Sigmoid colon (tissue), 7 donors: ENCODE measurements at regions of chr17 and their contacts with region 1.

Region 1: GRCh38 chr17:17681187-17681848 is at the start of gene RAI1:
- DNase-seq: peak; percentile 90
- H3K4me3 ChIP-seq: peak within 1 kb of the TSS; percentile 62 to 86 (median 75)
- H3K27ac ChIP-seq: peak within 1 kb of the TSS; percentile 93 to 99 (median 97)
- H3K4me1 ChIP-seq: peaks cover 0 to 40% (median 38%) of the 10 kb centered on the region in 4 donors
- H3K27me3 ChIP-seq: no peaks in the 10 kb centered on the region
- CTCF ChIP-seq: peak in 3 of 4 experiments; percentile 17 to 64 (median 37)
- EP300 ChIP-seq: no peak
- POLR2A ChIP-seq: no peak
- total RNA-seq, gene RAI1: 7.4 to 31.9 (median 12.5) TPM

Region 2: GRCh38 chr17:17729620-17730249 is 48.4 kb after region 1 on chr17:
- intact Hi-C with region 1: no loop called
- DNase-seq: no peak
- H3K4me3 ChIP-seq: no peak overlapping the region
- H3K27ac ChIP-seq: peak overlapping the region; percentile 21 to 75 (median 68)
- H3K4me1 ChIP-seq: peaks cover 0 to 74% (median 47%) of the 10 kb centered on the region in 4 donors
- H3K27me3 ChIP-seq: no peaks in the 10 kb centered on the region
- CTCF ChIP-seq: peak; percentile 7 to 63 (median 52)
- EP300 ChIP-seq: no peak
- POLR2A ChIP-seq: no peak

Region 3: GRCh38 chr17:17774009-17774881 is 92.9 kb after region 1 on chr17:
- intact Hi-C with region 1: loop called (anchors 1 kb)
- DNase-seq: peak; percentile 90
- H3K4me3 ChIP-seq: peak overlapping the region in 1 of 4 donors; percentile 20
- H3K27ac ChIP-seq: peak overlapping the region; percentile 86 to 93 (median 89)
- H3K4me1 ChIP-seq: peaks cover 0 to 84% (median 67%) of the 10 kb centered on the region in 4 donors
- H3K27me3 ChIP-seq: no peaks in the 10 kb centered on the region
- CTCF ChIP-seq: peak; percentile 29 to 60 (median 54)
- EP300 ChIP-seq: peak in 2 of 4 donors; percentile 63 to 81
- POLR2A ChIP-seq: no peak

Region 4: DNA sequence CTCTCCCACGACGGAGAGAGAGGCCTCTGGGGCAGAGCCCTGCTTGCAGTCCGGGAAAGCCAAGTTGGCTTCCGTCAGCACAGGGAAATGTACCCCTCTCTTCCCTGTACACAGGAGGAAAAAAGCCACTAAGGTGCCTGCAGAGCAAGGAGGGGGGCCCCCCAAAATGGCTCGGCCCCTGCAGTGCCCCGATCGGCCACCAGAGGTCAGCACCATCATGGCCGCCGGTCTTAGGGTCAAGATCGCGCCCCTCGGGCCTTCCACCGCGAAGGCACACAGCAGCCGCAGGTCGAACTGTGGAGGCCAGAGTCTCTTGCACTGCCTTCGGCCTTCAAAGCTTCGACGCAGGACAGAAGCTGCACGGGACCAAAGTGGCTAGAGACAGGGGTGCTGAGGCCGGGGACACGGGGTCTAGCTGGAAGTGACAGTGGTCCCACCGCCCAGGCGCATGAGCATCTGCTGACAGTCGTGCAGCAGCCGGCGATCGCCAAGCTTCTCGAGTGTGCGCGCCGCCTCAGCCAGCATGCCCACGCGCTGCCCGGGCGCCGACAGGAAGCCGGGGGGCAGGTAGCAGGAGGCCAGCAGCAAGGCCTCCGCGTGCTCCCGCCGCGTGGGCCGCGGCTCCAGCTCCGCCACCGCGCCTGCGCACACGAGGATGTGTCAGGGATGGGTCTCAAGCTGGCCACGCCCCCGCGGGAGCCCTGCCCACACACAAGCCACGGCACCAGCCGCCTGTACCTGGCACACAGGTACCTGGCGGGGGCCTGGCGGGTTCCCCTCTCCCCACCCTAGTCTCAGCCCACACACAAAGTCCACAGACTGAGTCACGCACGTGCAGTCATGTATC is 131.1 kb after region 1 on chr17:
- intact Hi-C with region 1: loop called (anchors 5 kb)
- DNase-seq: peak; percentile 89
- H3K4me3 ChIP-seq: no peak overlapping the region
- H3K27ac ChIP-seq: peak overlapping the region; percentile 31 to 90 (median 83)
- H3K4me1 ChIP-seq: peaks cover 0 to 66% (median 57%) of the 10 kb centered on the region in 4 donors
- H3K27me3 ChIP-seq: no peaks in the 10 kb centered on the region
- CTCF ChIP-seq: peak; percentile 99 to 100 (median 100)
- EP300 ChIP-seq: no peak
- POLR2A ChIP-seq: no peak

Region 5: GRCh38 chr17:17919169-17920107 is 238.1 kb after region 1 on chr17:
- intact Hi-C with region 1: loop called (anchors 2 kb)
- DNase-seq: peak; percentile 89
- H3K4me3 ChIP-seq: no peak overlapping the region
- H3K27ac ChIP-seq: peak overlapping the region in 3 of 4 donors; percentile 33 to 51 (median 50)
- H3K4me1 ChIP-seq: peaks cover 0 to 54% (median 47%) of the 10 kb centered on the region in 4 donors
- H3K27me3 ChIP-seq: no peaks in the 10 kb centered on the region
- CTCF ChIP-seq: peak; percentile 52 to 80 (median 67)
- EP300 ChIP-seq: no peak
- POLR2A ChIP-seq: no peak

Region 6: GRCh38 chr17:18033442-18034099 is 352.3 kb after region 1 on chr17:
- intact Hi-C with region 1: loop called (anchors 1 kb)
- DNase-seq: no peak
- H3K4me3 ChIP-seq: no peak overlapping the region
- H3K27ac ChIP-seq: no peak overlapping the region
- H3K4me1 ChIP-seq: peaks cover 0 to 19% (median 17%) of the 10 kb centered on the region in 4 donors
- H3K27me3 ChIP-seq: no peaks in the 10 kb centered on the region
- CTCF ChIP-seq: peak; percentile 39 to 51 (median 42)
- EP300 ChIP-seq: no peak
- POLR2A ChIP-seq: no peak

Region 7: DNA sequence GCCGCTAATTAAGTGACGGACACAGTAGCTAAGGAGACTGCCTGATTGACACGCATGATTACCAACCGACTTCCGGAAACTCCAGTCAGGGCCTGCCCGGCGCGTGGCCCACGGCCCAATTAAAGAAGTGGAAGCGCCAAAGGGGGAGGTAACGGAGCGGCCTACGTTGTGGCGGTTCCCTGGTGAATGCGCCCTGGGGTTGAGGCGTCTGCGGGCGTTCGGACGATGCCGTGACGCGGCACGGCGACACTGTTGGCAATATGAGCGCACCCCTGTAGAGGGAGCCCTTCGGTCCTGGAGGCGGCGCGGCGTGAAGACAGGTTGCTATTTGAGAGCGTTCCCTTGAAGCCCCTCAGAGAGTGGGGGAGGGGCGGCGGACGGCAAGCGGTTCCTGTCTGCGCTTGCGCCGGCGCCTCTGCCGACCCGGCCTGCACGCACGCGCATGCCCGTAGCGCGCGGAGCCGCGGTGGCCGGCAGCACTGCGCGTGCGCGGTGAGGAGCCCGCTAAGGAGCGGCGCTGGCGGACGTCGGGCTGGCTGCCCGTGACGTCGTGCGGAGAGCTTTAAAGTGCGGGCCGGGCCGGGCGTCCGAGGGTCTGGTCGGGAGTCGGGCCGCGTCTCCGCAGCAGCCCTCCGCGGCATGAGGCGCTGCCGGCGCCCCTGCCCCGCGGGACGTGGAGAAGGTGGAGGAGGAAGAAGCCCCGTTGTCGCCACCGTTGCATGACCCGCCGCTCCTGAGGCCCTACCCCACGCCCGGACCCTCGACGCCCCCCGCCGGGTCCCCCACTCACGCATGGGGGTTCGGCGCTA is 502.2 kb after region 1 on chr17 and contains the start of gene ALKBH5:
- intact Hi-C with region 1: loop called (anchors 10 kb)
- DNase-seq: peak; percentile 99
- H3K4me3 ChIP-seq: peak within 1 kb of the TSS; percentile 87 to 94 (median 92)
- H3K27ac ChIP-seq: peak within 1 kb of the TSS; percentile 97 to 99 (median 98)
- H3K4me1 ChIP-seq: peaks cover 0 to 55% (median 51%) of the 10 kb centered on the region in 4 donors
- H3K27me3 ChIP-seq: no peaks in the 10 kb centered on the region
- CTCF ChIP-seq: no peak
- EP300 ChIP-seq: no peak
- POLR2A ChIP-seq: peak; percentile 71 to 77
- total RNA-seq, gene ALKBH5: 100 to 109 (median 104) TPM